CD4-positive, alpha-beta T cell (primary cell): ENCODE measurements at regions of chr12 and their contacts with region 1.

Region 1: DNA sequence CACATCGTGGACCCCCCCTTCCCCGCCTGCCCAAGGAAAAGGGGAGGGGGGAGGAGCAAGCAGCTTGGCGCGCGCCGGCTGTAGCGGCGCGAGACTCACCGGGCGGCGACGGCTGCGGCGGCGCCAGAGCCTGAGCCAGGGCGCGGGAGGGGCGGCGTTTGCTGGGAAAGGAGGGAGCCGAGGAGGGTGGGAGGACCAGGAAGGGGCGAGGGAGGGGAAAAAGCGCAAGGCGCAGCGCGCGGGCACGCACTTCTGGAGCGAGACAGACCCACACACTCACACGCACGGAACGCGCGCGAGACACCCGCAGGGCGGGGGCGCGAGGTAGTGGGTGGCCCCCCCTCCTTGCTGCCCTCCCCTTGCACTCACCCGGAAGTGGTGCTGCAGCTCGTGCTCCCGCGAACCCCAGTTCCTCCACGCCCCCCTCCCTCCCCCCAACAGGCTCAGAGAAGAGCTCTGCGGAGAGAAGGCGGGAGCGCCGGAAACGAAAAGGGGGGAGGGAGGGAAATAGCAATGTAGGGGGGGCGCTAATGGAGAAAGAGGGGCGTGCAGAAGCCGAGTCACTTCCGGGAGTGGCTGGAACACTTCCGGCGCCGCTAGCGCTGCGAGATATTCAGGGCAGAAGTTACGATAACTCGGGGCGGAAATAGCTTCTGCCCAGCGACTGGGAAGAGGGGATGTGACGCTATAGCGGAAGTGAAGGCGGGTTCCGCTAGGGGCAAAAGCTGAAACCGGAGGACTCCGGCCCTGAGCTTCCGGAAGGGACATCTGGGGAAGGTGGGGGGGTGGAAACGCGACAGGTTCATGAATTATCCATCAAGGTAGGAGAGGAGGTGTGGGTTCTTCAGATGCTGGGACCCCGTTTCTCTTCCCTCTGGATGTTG is at the start of gene ZNF384:
- DNase-seq: peak; percentile 90 to 99 (median 94)
- ATAC-seq: peak; percentile 79
- H3K4me3 ChIP-seq: peak within 1 kb of the TSS; percentile 88
- H3K4me3 Mint-ChIP-seq: peak within 1 kb of the TSS; percentile 89
- H3K27ac ChIP-seq: peak within 1 kb of the TSS; percentile 92 to 94
- H3K27ac Mint-ChIP-seq: peak within 1 kb of the TSS; percentile 93
- H3K4me1 ChIP-seq: peaks cover 51% of the 10 kb centered on the region
- H3K4me1 Mint-ChIP-seq: peaks cover 51% of the 10 kb centered on the region
- H3K27me3 ChIP-seq: no peaks in the 10 kb centered on the region
- H3K27me3 Mint-ChIP-seq: no peaks in the 10 kb centered on the region
- CTCF ChIP-seq: peak; percentile 30
- total RNA-seq, gene ZNF384: 67.6 TPM

Region 2: GRCh38 chr12:6570264-6570887 is 118.9 kb before region 1 on chr12:
- CTCF ChIA-PET with region 1: interaction called, 3 read pairs
- POLR2A ChIA-PET with region 1: interaction called, 14 read pairs
- intact Hi-C with region 1: loop called (anchors 5 kb)
- DNase-seq: peak in 9 of 14 experiments; percentile 23 to 71 (median 44)
- ATAC-seq: no peak
- H3K4me3 ChIP-seq: no peak overlapping the region
- H3K4me3 Mint-ChIP-seq: peak overlapping the region; percentile 100
- H3K27ac ChIP-seq: no peak overlapping the region
- H3K27ac Mint-ChIP-seq: peak overlapping the region; percentile 98
- H3K4me1 ChIP-seq: peaks cover 41% of the 10 kb centered on the region
- H3K4me1 Mint-ChIP-seq: peaks cover 45% of the 10 kb centered on the region
- H3K27me3 ChIP-seq: no peaks in the 10 kb centered on the region
- H3K27me3 Mint-ChIP-seq: no peaks in the 10 kb centered on the region
- CTCF ChIP-seq: peak; percentile 42

Region 3: DNA sequence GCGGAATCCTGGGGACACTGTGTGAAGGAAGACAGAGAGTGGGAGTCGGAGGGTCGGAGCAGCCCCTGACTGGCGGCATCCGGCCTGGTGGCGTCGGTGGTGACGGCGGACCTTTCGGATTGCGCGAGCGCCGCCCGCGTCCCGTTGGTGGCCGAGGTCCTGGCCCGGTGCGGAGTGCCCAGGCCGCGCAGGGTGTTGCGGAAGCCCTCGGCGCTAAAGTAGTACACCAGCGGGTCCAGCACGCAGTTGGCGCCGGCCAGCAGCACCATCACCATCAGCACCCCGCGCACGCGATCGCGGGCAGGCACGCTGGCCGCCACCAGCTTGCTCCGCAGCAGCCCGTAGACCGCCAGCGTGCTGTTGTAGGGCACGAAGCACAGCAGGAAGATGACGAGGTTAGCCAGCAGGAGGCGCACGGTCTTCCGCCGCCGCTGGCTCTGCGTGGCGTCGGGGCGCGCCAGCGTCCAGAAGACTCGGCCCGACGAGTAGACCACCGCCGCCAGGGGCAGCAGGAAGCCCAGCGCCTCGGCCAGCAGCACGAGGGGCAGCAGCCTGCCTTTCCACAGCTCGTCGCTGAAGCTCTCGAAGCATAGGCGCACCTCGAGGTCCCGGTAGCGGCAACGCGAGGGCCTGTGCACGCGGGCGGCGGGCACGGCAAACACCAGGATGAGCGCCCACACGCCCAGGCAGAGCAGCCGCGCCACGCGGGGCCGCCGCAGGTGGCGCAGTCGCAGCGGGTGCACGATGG is 68.9 kb before region 1 on chr12:
- CTCF ChIA-PET with region 1: interaction called, 5 read pairs
- POLR2A ChIA-PET with region 1: interaction called, 22 read pairs
- intact Hi-C with region 1: loop called in 1 of 2 experiments (anchors 2 kb)
- DNase-seq: peak in 12 of 14 experiments; percentile 26 to 85 (median 50)
- ATAC-seq: peak; percentile 75
- H3K4me3 ChIP-seq: peak overlapping the region; percentile 17
- H3K4me3 Mint-ChIP-seq: peak overlapping the region; percentile 70
- H3K27ac ChIP-seq: peak overlapping the region in 1 of 2 donors; percentile 21
- H3K27ac Mint-ChIP-seq: peak overlapping the region; percentile 65
- H3K4me1 ChIP-seq: peaks cover 13% of the 10 kb centered on the region
- H3K4me1 Mint-ChIP-seq: peaks cover 15% of the 10 kb centered on the region
- H3K27me3 ChIP-seq: no peaks in the 10 kb centered on the region
- H3K27me3 Mint-ChIP-seq: no peaks in the 10 kb centered on the region
- CTCF ChIP-seq: peak; percentile 75

Region 4: GRCh38 chr12:6700646-6701051 is 11.4 kb after region 1 on chr12 and contains the start of gene PIANP:
- CTCF ChIA-PET with region 1: interaction called, 3 read pairs
- POLR2A ChIA-PET with region 1: interaction called, 16 read pairs
- intact Hi-C with region 1: no loop called
- DNase-seq: peak; percentile 34 to 77 (median 56)
- ATAC-seq: peak; percentile 93
- H3K4me3 ChIP-seq: peak within 1 kb of the TSS; percentile 43
- H3K4me3 Mint-ChIP-seq: peak within 1 kb of the TSS; percentile 86
- H3K27ac ChIP-seq: no peak within 1 kb of the TSS
- H3K27ac Mint-ChIP-seq: no peak within 1 kb of the TSS
- H3K4me1 ChIP-seq: peaks cover 26% of the 10 kb centered on the region
- H3K4me1 Mint-ChIP-seq: peaks cover 26% of the 10 kb centered on the region
- H3K27me3 ChIP-seq: peaks cover 32 to 42% of the 10 kb centered on the region in 2 experiments
- H3K27me3 Mint-ChIP-seq: peaks cover 57% of the 10 kb centered on the region
- CTCF ChIP-seq: no peak
- total RNA-seq, gene PIANP: 0.87 to 0.99 TPM

Region 5: GRCh38 chr12:6792522-6793201 is 103.4 kb after region 1 on chr12:
- CTCF ChIA-PET with region 1: interaction called, 5 read pairs
- POLR2A ChIA-PET with region 1: interaction called, 11 read pairs
- intact Hi-C with region 1: no loop called
- DNase-seq: peak in 12 of 14 experiments; percentile 41 to 75 (median 58)
- ATAC-seq: peak; percentile 69
- H3K4me3 ChIP-seq: peak overlapping the region; percentile 66
- H3K4me3 Mint-ChIP-seq: peak overlapping the region; percentile 96
- H3K27ac ChIP-seq: peak overlapping the region; percentile 72 to 81
- H3K27ac Mint-ChIP-seq: peak overlapping the region; percentile 93
- H3K4me1 ChIP-seq: peaks cover 79% of the 10 kb centered on the region
- H3K4me1 Mint-ChIP-seq: peaks cover 80% of the 10 kb centered on the region
- H3K27me3 ChIP-seq: no peaks in the 10 kb centered on the region
- H3K27me3 Mint-ChIP-seq: no peaks in the 10 kb centered on the region
- CTCF ChIP-seq: no peak

Region 6: DNA sequence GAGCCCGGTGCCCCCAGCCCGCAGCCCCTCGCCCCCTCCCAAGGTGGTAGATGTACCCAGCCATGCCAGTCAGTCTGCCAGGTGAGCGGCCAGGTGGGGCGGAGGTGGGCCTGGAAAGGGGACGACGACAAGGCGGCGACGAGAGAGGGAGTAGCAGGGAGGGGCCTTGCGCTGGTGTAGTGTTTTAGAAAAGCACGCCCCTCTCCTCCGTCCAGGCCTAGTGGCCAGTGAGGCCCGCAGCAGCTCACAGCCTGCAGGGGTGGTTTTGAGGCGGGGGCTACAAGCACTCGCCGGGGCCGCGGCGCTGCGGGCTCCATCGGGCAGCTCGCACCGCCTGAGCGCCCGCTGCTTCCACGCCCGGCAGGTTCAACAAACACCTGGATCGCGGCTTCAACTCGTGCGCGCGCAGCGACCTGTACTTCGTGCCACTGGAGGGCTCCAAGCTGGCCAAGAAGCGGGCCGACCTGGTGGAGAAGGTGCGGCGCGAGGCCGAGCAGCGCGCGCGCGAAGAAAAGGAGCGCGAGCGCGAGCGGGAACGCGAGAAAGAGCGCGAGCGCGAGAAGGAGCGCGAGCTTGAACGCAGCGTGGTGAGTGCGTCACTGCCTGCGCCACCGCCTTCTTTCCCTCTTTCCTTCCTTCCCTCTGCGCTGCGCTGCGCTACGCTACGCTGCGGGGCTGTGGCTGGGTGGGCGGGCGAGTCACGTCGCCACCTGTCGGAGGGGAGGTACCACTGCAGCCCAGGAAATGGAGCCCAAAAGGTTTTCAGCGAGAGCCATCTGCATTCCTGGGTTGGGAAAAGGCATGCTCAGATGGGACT is 248.4 kb after region 1 on chr12:
- CTCF ChIA-PET with region 1: interaction called, 6 read pairs
- POLR2A ChIA-PET with region 1: interaction called, 12 read pairs
- intact Hi-C with region 1: no loop called
- DNase-seq: peak; percentile 86 to 99 (median 92)
- ATAC-seq: peak; percentile 91
- H3K4me3 ChIP-seq: peak overlapping the region; percentile 72
- H3K4me3 Mint-ChIP-seq: peak overlapping the region; percentile 90
- H3K27ac ChIP-seq: peak overlapping the region; percentile 89 to 92
- H3K27ac Mint-ChIP-seq: peak overlapping the region; percentile 95
- H3K4me1 ChIP-seq: peaks cover 47% of the 10 kb centered on the region
- H3K4me1 Mint-ChIP-seq: peaks cover 61% of the 10 kb centered on the region
- H3K27me3 ChIP-seq: no peaks in the 10 kb centered on the region
- H3K27me3 Mint-ChIP-seq: no peaks in the 10 kb centered on the region
- CTCF ChIP-seq: peak; percentile 89